Activated T-helper 2 cell treated with anti-CD3 and anti-CD28 coated beads, Interferon-gamma antibody, Interleukin-2, Interleukin-4, amounts not matched to agents 10 μg/mL and 5 μg/mL and 100 μg/mL, durations not matched to agents 14 hours and 24 hours and 36 hours (primary cell): ENCODE measurements at regions of chr16 and their contacts with region 1.

Region 1: GRCh38 chr16:69386596-69386995 is 789 bp upstream of the TERF2 start:
- DNase-seq: no peak
- H3K4me3 Mint-ChIP-seq: no peak overlapping the region
- H3K27ac Mint-ChIP-seq: no peak overlapping the region
- H3K4me1 Mint-ChIP-seq: peaks cover 20% of the 10 kb centered on the region
- H3K27me3 Mint-ChIP-seq: no peaks in the 10 kb centered on the region

Region 2: GRCh38 chr16:69339289-69340108 is 47.1 kb before region 1 on chr16 and contains the starts of genes COG8 and NIP7:
- intact Hi-C with region 1: loop called (anchors 2 kb)
- DNase-seq: peak; percentile 91
- H3K4me3 Mint-ChIP-seq: peak within 1 kb of the TSS; percentile 98
- H3K27ac Mint-ChIP-seq: peak within 1 kb of the TSS; percentile 96
- H3K4me1 Mint-ChIP-seq: peaks cover 31% of the 10 kb centered on the region
- H3K27me3 Mint-ChIP-seq: no peaks in the 10 kb centered on the region
- total RNA-seq, gene COG8: 41.5 and 42.9 TPM in 2 replicates
- total RNA-seq, gene NIP7: 60.5 and 60.8 TPM in 2 replicates

Region 3: GRCh38 chr16:69443927-69444631 is 57.5 kb after region 1 on chr16:
- intact Hi-C with region 1: no loop called
- DNase-seq: no peak
- H3K4me3 Mint-ChIP-seq: peak overlapping the region; percentile 70
- H3K27ac Mint-ChIP-seq: peak overlapping the region; percentile 92
- H3K4me1 Mint-ChIP-seq: peaks cover 42% of the 10 kb centered on the region
- H3K27me3 Mint-ChIP-seq: no peaks in the 10 kb centered on the region

Region 4: DNA sequence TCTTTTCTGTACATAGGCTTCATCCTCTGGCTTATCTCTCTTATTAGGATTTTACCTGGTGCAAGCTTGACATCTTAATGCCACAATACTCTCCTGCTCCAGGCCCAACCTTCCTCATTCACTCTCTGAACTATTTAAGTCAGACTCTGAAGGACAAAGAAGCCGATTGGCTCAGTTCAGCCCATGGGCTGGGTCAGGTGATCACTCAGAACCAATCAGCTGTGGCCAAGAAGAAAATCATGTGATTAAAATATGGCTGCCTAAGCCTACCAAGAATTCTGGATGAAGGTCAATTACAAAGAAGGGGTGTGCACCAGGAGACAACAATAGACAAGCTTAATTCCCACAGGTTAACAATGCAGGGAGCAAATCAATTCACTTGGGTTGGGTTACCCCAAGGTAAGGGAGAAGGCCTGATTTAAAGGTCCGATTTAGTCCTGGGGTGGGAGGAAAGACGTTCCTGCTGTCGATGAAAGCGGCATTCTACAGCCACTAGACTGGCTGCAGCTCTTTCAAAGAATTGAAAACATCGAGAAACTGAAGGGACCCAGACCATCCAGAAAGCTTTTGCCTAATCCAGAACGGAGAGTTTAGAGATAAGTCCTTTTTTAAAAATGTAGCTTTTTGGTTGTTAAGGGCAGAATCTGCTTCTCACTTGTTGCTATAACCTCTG is 136.3 kb after region 1 on chr16:
- intact Hi-C with region 1: no loop called
- DNase-seq: no peak
- H3K4me3 Mint-ChIP-seq: no peak overlapping the region
- H3K27ac Mint-ChIP-seq: no peak overlapping the region
- H3K4me1 Mint-ChIP-seq: peaks cover 26% of the 10 kb centered on the region
- H3K27me3 Mint-ChIP-seq: no peaks in the 10 kb centered on the region